ENCODE measurements at regions of chr4 and their contacts with region 1.

Region 1: GRCh38 chr4:52028969-52029368 is 8.8 kb upstream of the LRRC66 start:
- DNase-seq: no peak
- ATAC-seq: no peak

Region 2: GRCh38 chr4:51820443-51821234 is 208.3 kb before region 1 on chr4:
- intact Hi-C with region 1: no loop called
- DNase-seq: no peak
- ATAC-seq: no peak

Region 3: DNA sequence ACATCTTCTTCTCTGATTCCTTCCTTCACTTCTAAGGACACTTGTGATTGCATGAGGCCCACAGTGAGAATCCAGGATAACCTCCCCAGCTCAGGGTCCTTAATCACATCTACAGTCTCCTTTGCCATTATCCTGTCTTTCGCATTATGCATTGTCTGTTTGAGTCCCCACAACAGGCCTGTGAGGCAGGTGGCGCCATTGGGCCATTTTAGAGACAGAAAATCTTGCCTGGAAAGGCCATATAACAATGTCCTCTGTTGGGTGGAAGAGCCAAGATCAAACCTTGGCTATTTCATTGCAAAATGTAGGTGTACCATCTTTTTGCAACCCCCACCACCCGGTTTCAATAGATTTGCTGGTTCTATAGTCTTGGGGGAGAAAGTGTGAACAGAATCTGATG is 197.8 kb before region 1 on chr4:
- intact Hi-C with region 1: loop called (anchors 1 kb)
- DNase-seq: peak; percentile 75
- ATAC-seq: peak; percentile 54

Region 4: DNA sequence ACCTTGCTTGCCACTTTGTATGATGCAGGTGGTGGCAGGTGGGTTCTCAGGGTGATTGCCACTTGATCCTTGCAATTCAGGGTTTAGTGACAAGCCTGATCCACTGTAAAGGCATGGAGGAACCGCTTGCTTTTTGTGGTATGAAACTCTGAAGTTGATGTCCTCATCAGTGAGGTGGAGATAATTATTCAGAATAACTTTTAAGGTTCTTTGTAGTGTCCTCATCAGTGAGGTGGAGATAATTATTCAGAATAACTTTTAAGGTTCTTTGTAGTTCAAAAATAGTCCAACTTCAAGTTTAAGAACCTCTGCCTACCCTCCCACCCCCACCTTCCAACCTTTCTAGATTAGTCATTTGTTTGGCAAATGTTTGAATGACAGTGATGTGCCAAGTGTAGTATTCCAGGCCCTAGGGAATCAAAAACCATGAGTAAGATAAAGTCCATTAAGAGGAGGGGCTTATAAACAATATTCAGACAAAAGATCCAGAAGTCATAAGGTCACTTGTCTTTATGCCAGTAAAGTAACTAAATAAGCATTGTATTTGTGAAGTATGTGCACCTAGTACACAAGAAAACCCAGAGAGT is 134.8 kb before region 1 on chr4:
- intact Hi-C with region 1: loop called (anchors 5 kb)
- DNase-seq: no peak
- ATAC-seq: no peak

Region 5: GRCh38 chr4:52103319-52103718 is 74.3 kb after region 1 on chr4:
- intact Hi-C with region 1: no loop called
- DNase-seq: no peak
- ATAC-seq: no peak

Region 6: DNA sequence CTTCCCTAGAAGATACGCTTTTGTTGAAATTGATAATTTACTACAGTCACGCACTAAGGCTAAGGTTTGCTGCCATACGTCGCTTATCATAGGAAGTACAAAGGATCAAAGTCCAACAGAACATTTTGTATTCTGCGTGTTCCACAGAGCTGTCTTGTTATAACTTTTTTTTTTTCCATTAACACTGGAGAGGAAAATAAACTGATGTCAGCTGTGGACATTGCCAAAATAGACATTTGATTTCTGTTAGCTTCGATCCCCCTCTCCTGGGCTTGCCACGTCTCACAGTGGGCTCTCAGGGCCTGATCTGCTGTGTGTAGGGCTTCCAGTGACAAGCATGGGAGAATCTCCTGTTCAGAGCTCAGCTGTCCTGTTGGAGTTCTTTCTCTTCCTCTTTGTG is 115.4 kb after region 1 on chr4:
- intact Hi-C with region 1: no loop called
- DNase-seq: no peak
- ATAC-seq: peak; percentile 37

Measured in Right ventricle myocardium inferior (tissue), 1 donor.